ENCODE measurements at regions of chr6 and their contacts with region 1.

Region 1: GRCh38 chr6:116531675-116532570 is 13.6 kb downstream of the TRAPPC3L start:
- DNase-seq: peak in 4 of 5 donors; percentile 33 to 56 (median 54)
- ATAC-seq: peak in 3 of 4 donors; percentile 89 to 90 (median 90)
- H3K4me3 ChIP-seq: no peak overlapping the region
- H3K27ac ChIP-seq: no peak overlapping the region
- H3K4me1 ChIP-seq: peaks cover 0 to 16% (median 5%) of the 10 kb centered on the region in 12 donors
- H3K27me3 ChIP-seq: no peaks in the 10 kb centered on the region
- CTCF ChIP-seq: peak; percentile 70 to 88 (median 81)
- POLR2A ChIP-seq: no peak

Region 2: DNA sequence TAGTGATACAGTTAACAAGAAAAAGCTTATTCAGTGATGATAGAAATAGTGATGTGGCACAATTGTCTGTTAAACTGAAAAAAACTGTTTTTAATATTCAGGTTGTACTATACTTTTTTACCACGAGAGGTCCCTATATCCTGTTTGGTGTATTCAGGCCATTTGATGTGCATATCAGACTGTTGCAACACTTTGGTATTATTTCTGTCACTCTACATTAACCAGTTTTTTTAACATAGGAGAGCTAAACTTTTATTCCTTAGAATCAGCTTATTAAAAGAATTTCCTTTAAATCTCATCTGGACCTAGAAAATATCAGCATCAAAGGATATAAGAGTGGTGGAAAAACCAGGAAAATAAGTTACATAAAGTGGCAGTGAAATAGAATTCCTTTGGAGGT is 314.9 kb before region 1 on chr6:
- intact Hi-C with region 1: loop called in 1 of 10 experiments (anchors 5 kb)
- DNase-seq: no peak
- ATAC-seq: peak in 3 of 4 donors; percentile 40 to 59 (median 48)
- H3K4me3 ChIP-seq: no peak overlapping the region
- H3K27ac ChIP-seq: no peak overlapping the region
- H3K4me1 ChIP-seq: peaks cover 0 to 11% (median 3%) of the 10 kb centered on the region in 12 donors
- H3K27me3 ChIP-seq: no peaks in the 10 kb centered on the region
- CTCF ChIP-seq: peak; percentile 42 to 67 (median 54)
- POLR2A ChIP-seq: no peak

Region 3: DNA sequence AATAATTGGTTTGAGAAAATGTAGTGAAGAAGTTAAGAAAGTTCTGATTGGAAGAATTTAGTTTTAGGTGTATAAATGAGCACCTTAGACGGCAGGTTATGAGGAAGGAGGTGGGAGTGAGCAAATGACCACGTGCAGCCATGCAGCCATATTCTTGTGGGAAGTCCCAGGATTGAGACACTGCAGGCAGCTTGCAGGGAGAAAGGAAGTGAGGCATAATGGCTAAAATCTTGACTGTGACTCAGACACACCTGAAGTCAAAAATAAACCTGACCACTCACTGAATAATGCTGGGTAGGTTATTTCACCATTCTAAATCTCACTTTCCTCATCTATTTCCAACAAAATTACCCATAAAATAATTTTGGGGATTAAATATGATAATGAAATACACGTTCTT is 144.5 kb before region 1 on chr6:
- intact Hi-C with region 1: no loop called
- DNase-seq: no peak
- ATAC-seq: peak in 2 of 4 donors; percentile 19 to 33
- H3K4me3 ChIP-seq: no peak overlapping the region
- H3K27ac ChIP-seq: peak overlapping the region in 1 of 12 donors; percentile 70
- H3K4me1 ChIP-seq: peaks cover 0 to 87% (median 23%) of the 10 kb centered on the region in 12 donors
- H3K27me3 ChIP-seq: no peaks in the 10 kb centered on the region
- CTCF ChIP-seq: no peak
- POLR2A ChIP-seq: no peak

Region 4: GRCh38 chr6:116444092-116444491 is 87.8 kb before region 1 on chr6:
- intact Hi-C with region 1: loop called in 5 of 10 experiments (anchors 5 to 10 kb)
- DNase-seq: no peak
- ATAC-seq: peak in 3 of 4 donors; percentile 53 to 61 (median 59)
- H3K4me3 ChIP-seq: no peak overlapping the region
- H3K27ac ChIP-seq: no peak overlapping the region
- H3K4me1 ChIP-seq: peaks cover 0 to 43% (median 0%) of the 10 kb centered on the region in 12 donors
- H3K27me3 ChIP-seq: no peaks in the 10 kb centered on the region
- CTCF ChIP-seq: peak; percentile 8 to 62 (median 41)
- POLR2A ChIP-seq: no peak

Region 5: GRCh38 chr6:116561377-116562018 is 29.6 kb after region 1 on chr6:
- intact Hi-C with region 1: loop called in 6 of 10 experiments (anchors 1 to 2 kb)
- DNase-seq: peak; percentile 49 to 73 (median 64)
- ATAC-seq: peak in 3 of 4 donors; percentile 41 to 63 (median 43)
- H3K4me3 ChIP-seq: peak overlapping the region in 1 of 12 donors; percentile 32
- H3K27ac ChIP-seq: no peak overlapping the region
- H3K4me1 ChIP-seq: peaks cover 0 to 27% (median 7%) of the 10 kb centered on the region in 12 donors
- H3K27me3 ChIP-seq: no peaks in the 10 kb centered on the region
- CTCF ChIP-seq: peak; percentile 87 to 97 (median 95)
- POLR2A ChIP-seq: no peak

Region 6: GRCh38 chr6:116586276-116586675 is 54.4 kb after region 1 on chr6:
- intact Hi-C with region 1: no loop called
- DNase-seq: no peak
- ATAC-seq: no peak
- H3K4me3 ChIP-seq: no peak overlapping the region
- H3K27ac ChIP-seq: no peak overlapping the region
- H3K4me1 ChIP-seq: no peaks in the 10 kb centered on the region
- H3K27me3 ChIP-seq: no peaks in the 10 kb centered on the region
- CTCF ChIP-seq: no peak
- POLR2A ChIP-seq: no peak

Region 7: GRCh38 chr6:116633685-116634084 is 101.8 kb after region 1 on chr6:
- intact Hi-C with region 1: no loop called
- DNase-seq: no peak
- ATAC-seq: no peak
- H3K4me3 ChIP-seq: no peak overlapping the region
- H3K27ac ChIP-seq: no peak overlapping the region
- H3K4me1 ChIP-seq: no peaks in the 10 kb centered on the region
- H3K27me3 ChIP-seq: no peaks in the 10 kb centered on the region
- CTCF ChIP-seq: no peak
- POLR2A ChIP-seq: no peak

Region 8: GRCh38 chr6:116648156-116648555 is 116.2 kb after region 1 on chr6:
- intact Hi-C with region 1: loop called in 1 of 10 experiments (anchors 5 kb)
- DNase-seq: no peak
- ATAC-seq: no peak
- H3K4me3 ChIP-seq: no peak overlapping the region
- H3K27ac ChIP-seq: no peak overlapping the region
- H3K4me1 ChIP-seq: no peaks in the 10 kb centered on the region
- H3K27me3 ChIP-seq: no peaks in the 10 kb centered on the region
- CTCF ChIP-seq: no peak
- POLR2A ChIP-seq: no peak

Region 9: DNA sequence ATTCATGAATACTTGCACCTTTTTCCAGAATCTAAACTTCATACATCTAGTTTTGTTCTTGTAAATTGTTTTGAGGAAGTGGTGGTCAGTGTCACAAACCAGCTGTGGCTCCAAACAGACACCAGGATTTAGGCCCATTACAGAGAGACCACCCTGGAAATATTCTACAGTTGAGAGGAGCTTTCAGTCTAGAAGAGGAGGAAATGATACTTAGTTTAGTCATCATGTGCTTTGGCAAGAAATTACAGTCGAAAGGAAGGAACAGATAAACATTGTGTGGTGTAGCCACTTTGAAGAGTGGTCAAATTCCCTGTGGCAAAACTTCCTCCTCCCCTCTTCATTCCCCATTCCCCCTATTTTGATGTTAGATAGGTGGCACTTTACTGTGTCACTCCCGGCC is 966.2 kb after region 1 on chr6:
- intact Hi-C with region 1: no loop called
- DNase-seq: no peak
- ATAC-seq: peak in 3 of 4 donors; percentile 48 to 63 (median 49)
- H3K4me3 ChIP-seq: no peak overlapping the region
- H3K27ac ChIP-seq: peak overlapping the region in 10 of 12 donors; percentile 2 to 63 (median 39)
- H3K4me1 ChIP-seq: peaks cover 0 to 52% (median 15%) of the 10 kb centered on the region in 12 donors
- H3K27me3 ChIP-seq: no peaks in the 10 kb centered on the region
- CTCF ChIP-seq: no peak
- POLR2A ChIP-seq: no peak

Measured in heart left ventricle (tissue), 16 donors.